PC-9 (cell line): ENCODE measurements at regions of chr20 and their contacts with region 1.

Region 1: DNA sequence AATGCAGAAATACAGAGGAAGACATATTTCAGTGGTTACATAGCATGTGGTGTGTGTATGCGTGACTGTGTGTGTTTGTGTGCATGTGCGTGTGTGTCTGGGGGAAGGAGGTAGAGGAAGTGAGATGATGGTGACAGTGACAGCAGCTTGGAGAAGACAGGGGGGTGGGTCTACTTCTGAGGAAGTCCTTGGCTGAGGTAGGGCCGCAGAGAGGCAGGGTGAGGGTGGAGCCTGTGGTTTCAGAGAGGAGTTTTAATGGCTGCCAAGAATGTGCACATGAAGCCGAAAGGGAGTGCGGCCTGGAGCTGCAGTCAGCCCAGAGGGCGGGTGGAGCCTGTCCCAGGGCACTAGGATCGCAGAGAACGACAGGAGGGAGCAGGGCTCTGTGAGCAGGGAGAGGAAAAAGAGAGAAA is 22.7 kb upstream of the RNF24 start:
- DNase-seq: peak; percentile 70 to 81
- H3K4me3 ChIP-seq: no peak overlapping the region
- H3K27ac ChIP-seq: no peak overlapping the region
- H3K4me1 ChIP-seq: peaks cover 41% of the 10 kb centered on the region
- H3K27me3 ChIP-seq: no peaks in the 10 kb centered on the region
- CTCF ChIP-seq: no peak

Region 2: DNA sequence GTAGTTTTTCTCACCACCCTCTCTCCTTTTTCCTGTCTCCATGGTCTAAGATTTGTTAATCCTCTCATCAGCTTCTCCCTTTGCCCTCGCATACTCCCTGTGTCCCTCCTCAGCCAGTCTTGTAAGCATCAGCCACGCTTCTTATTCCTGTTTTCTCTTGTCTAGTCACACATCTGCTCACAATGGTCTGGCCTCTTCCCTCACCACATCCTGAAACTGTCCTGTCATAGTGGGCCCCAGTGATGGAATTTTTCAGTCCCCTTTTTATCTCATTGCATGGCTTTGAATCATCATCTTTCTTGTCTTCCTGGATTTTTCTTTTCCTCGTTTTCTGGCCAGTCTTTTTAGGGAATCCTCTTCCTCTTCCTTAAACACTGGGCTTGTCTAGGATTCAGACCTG is 432.0 kb before region 1 on chr20:
- CTCF ChIA-PET with region 1: no interaction called
- POLR2A ChIA-PET with region 1: no interaction called
- intact Hi-C with region 1: no loop called
- DNase-seq: no peak
- H3K4me3 ChIP-seq: no peak overlapping the region
- H3K27ac ChIP-seq: no peak overlapping the region
- H3K4me1 ChIP-seq: no peaks in the 10 kb centered on the region
- H3K27me3 ChIP-seq: no peaks in the 10 kb centered on the region
- CTCF ChIP-seq: no peak

Region 3: GRCh38 chr20:3871550-3872297 is 166.3 kb before region 1 on chr20:
- CTCF ChIA-PET with region 1: no interaction called
- POLR2A ChIA-PET with region 1: no interaction called
- intact Hi-C with region 1: no loop called
- DNase-seq: peak; percentile 38 to 88
- H3K4me3 ChIP-seq: no peak overlapping the region
- H3K27ac ChIP-seq: peak overlapping the region; percentile 40
- H3K4me1 ChIP-seq: peaks cover 18% of the 10 kb centered on the region
- H3K27me3 ChIP-seq: no peaks in the 10 kb centered on the region
- CTCF ChIP-seq: no peak

Region 4: DNA sequence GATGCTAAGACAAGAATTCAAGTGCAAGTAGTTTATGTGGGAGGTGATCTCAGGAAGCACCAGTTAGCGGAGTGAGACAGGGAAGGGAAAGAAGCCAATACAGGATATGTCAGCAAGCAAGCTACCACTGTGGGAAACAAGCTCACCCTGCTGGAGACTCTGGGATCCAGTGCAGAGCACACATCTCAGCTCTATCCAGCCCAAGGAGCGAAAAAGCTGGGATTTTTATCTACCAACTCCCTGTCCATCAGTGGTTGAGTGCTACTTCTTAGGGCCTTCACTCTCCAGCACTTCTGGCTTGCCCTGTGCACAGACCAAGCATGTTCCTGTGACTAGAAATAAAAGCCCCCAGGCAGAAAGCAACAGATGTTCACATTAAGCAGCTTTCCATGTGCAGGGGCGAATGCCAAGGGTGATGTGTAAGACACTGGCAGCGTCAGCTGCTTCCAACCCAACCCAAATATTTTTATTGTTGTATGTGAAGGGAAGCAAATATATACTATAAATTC is 11.9 kb before region 1 on chr20:
- CTCF ChIA-PET with region 1: no interaction called
- POLR2A ChIA-PET with region 1: interaction called, 11 read pairs
- intact Hi-C with region 1: no loop called
- DNase-seq: no peak
- H3K4me3 ChIP-seq: no peak overlapping the region
- H3K27ac ChIP-seq: no peak overlapping the region
- H3K4me1 ChIP-seq: 0 out of 2 replicates have a peak, but pooled peaks cover 13% of the 10 kb centered on the region
- H3K27me3 ChIP-seq: no peaks in the 10 kb centered on the region
- CTCF ChIP-seq: no peak

Region 5: GRCh38 chr20:4084096-4084495 is 46.0 kb after region 1 on chr20:
- CTCF ChIA-PET with region 1: interaction called, 4 read pairs
- POLR2A ChIA-PET with region 1: no interaction called
- intact Hi-C with region 1: loop called (anchors 2 kb)
- DNase-seq: no peak
- H3K4me3 ChIP-seq: no peak overlapping the region
- H3K27ac ChIP-seq: no peak overlapping the region
- H3K4me1 ChIP-seq: peaks cover 11% of the 10 kb centered on the region; the same call in 1 of the 2 replicates
- H3K27me3 ChIP-seq: no peaks in the 10 kb centered on the region
- CTCF ChIP-seq: no peak

Region 6: GRCh38 chr20:4702562-4703280 is 664.7 kb after region 1 on chr20:
- CTCF ChIA-PET with region 1: no interaction called
- POLR2A ChIA-PET with region 1: no interaction called
- intact Hi-C with region 1: no loop called
- DNase-seq: no peak
- H3K4me3 ChIP-seq: no peak overlapping the region
- H3K27ac ChIP-seq: peak overlapping the region; percentile 65
- H3K4me1 ChIP-seq: peaks cover 19% of the 10 kb centered on the region
- H3K27me3 ChIP-seq: no peaks in the 10 kb centered on the region
- CTCF ChIP-seq: no peak